PC-9 (cell line): ENCODE measurements at regions of chr9 and their contacts with region 1.

Region 1: GRCh38 chr9:34139477-34140146 is 13.1 kb upstream of the DCAF12 start:
- DNase-seq: peak in 1 of 2 experiments; percentile 21
- H3K4me3 ChIP-seq: no peak overlapping the region
- H3K27ac ChIP-seq: no peak overlapping the region
- H3K4me1 ChIP-seq: no peaks in the 10 kb centered on the region
- H3K27me3 ChIP-seq: no peaks in the 10 kb centered on the region
- CTCF ChIP-seq: no peak; the same call in 1 of the 2 replicates

Region 2: DNA sequence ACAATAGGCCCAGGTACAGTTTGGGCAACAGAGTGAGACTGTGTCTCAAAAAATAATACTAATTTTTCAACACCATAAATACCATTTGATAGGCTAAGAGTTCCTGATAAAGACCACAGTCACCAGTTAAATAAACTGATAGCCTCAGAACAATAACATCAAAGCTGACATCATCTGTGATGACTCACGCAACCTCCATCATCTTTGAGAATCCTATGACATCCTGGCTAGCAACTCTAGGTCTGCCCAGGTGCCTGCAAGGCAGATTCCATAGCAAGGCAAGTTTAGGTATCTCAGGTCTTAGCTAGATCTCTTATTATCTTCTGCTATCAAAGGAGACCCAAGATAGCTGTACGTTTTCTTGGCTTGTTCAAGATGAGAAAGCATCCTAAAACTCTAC is 60.4 kb before region 1 on chr9:
- CTCF ChIA-PET with region 1: no interaction called
- POLR2A ChIA-PET with region 1: interaction called, 22 read pairs
- intact Hi-C with region 1: no loop called
- DNase-seq: peak; percentile 22 to 62
- H3K4me3 ChIP-seq: no peak overlapping the region
- H3K27ac ChIP-seq: no peak overlapping the region
- H3K4me1 ChIP-seq: no peaks in the 10 kb centered on the region
- H3K27me3 ChIP-seq: no peaks in the 10 kb centered on the region
- CTCF ChIP-seq: no peak

Region 3: DNA sequence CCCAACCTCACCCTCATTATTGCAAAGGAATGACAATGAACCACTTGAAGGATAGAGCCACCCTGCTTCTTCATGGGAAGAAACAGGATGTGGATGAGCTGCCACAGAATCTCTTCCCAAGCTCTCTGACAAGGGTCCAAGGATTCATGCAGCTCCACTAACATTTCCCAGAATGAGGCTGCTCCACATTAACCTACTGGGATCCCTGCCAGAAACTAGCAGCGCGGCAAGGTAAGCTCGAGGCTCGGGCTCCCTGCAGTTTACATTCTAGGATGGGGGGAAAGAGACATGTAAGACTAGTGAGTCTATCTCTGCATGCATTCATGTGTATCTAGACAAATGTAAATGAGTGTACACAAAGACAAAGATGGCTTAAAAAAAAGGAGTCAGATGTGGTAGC is 25.2 kb before region 1 on chr9:
- CTCF ChIA-PET with region 1: no interaction called
- POLR2A ChIA-PET with region 1: no interaction called
- intact Hi-C with region 1: no loop called
- DNase-seq: no peak
- H3K4me3 ChIP-seq: no peak overlapping the region
- H3K27ac ChIP-seq: no peak overlapping the region
- H3K4me1 ChIP-seq: no peaks in the 10 kb centered on the region
- H3K27me3 ChIP-seq: no peaks in the 10 kb centered on the region
- CTCF ChIP-seq: no peak

Region 4: DNA sequence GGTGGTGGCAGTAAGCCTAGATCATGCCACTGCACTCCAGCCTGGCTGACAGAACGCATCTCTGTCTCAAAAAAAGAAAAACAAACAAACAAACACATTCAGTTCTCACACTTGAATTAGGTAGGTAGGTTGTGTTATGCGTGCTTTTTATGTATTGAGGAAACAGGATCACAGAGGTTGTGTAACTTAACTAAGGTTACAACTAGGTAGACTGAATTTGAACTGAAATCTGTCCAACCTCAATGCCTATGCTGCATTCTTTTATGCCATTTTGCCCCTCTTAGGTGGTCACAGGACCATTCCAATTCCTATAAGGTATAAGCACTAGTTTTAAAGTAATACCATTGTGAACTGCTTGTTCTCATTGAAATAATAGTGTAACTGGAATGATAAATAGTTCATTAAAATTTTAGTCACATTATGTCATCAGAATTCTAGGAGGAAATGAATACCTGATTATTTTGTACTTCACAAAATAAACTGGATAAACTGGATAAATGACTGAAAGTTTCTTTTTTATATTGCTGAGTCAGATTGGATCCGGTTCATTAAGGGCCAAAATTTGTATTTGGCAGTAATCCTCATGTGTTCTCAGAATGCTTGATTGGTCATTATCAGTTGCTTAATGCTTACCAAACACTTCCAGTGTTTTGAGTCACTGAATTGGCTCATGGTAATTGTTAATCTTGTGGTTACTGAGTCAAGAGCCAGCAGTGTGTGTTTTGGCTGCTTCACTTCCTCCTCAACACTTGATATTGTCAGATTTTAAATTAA is 46.4 kb after region 1 on chr9:
- CTCF ChIA-PET with region 1: interaction called, 7 read pairs
- POLR2A ChIA-PET with region 1: no interaction called
- intact Hi-C with region 1: loop called (anchors 1 kb)
- DNase-seq: peak; percentile 25 to 96
- H3K4me3 ChIP-seq: peak overlapping the region; percentile 17; the same call in 1 of the 2 replicates
- H3K27ac ChIP-seq: peak overlapping the region; percentile 99
- H3K4me1 ChIP-seq: peaks cover 32% of the 10 kb centered on the region
- H3K27me3 ChIP-seq: no peaks in the 10 kb centered on the region
- CTCF ChIP-seq: no peak